Posterior cingulate gyrus (tissue), 11 donors: ENCODE measurements at regions of chr1 and their contacts with region 1.

Region 1: GRCh38 chr1:65067491-65068201 is 80.4 kb upstream of the AK4 start:
- DNase-seq: peak; percentile 51 to 94 (median 66)

Region 2: GRCh38 chr1:64966158-64966971 is 101.3 kb before region 1 on chr1 and contains the start of gene JAK1:
- intact Hi-C with region 1: loop called (anchors 5 kb)
- DNase-seq: peak; percentile 76 to 98 (median 83)

Region 3: DNA sequence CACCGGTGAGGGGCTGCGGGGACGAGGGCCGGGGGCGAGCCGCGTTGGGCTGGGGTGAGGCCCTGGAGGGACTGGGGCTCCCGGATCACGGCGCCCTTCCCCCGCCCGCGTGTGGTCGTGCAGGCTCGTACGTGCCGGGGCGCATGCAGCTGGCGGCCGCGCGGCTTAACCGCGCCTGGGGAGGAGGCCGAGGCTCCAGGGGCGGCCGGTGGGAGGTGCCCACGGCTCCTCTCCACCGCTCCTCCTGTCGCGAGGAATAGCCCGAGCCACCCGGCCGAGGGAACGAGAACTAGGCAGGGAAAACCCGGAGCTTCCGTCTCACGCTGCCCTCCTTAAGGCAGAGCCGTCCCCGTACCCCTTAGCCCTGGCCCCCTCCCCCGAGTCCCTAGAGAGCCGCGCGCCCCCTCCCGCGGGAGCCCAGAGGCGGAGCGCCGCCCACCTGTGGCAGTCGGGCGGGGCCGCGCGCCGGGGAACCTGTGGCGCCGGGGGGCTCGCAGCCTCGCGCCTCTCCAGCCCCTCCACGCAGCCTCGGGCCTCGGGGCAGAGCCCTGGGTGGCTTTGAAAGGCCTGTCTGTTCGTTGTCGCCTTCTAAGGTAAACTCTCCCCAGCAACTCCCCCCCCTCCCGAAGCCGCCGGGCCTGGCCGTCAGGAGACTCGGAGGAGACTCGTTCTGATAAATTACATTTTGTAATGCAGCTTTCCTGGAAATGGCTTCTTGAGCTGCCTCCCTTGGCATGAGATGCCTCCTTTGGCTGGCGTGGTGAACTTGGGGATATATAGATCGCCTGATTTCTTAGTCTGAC is 81.1 kb after region 1 on chr1:
- intact Hi-C with region 1: loop called (anchors 5 kb)
- DNase-seq: peak in 8 of 10 donors; percentile 16 to 87 (median 33)

Region 4: GRCh38 chr1:65189576-65190115 is 122.0 kb after region 1 on chr1:
- intact Hi-C with region 1: no loop called
- DNase-seq: no peak